ENCODE measurements at regions of chr15 and their contacts with region 1.

Region 1: DNA sequence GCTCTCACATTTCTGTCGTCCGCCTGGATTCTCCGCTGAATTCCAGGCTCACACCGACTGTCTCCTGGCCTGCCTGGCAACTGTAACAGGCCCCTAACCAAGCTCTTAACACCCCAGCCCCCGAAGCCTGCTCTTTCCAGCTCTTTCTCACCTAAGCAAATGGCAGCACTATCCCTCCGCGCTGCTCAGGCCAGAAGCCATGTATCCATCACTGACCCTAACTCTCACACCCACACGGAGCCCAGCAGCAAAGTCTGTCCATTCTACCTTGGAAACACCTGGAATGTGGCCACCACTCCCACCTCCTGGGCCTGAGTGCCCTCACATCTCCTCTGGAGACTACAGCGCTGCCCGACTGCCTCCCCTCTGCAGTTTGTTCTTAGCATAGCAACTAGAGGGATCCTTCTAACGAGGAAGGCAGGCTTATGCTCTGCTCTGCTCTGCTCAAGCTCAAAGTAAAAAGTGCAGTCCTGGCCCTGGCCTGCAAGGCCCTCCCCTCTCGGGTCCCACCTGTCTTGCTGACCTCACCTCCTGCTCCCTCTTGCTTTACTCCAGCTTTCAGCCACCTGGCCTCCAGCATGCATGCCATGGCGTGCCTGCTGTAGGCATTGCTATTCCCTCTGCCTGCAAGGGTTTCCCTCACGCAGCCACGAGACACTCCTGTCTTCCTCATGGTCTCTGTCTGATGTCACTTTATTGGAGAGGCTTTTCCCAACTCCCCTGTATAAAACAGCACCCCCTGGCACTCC is 27.2 kb downstream of the FEM1B start:
- DNase-seq: peak; percentile 46
- ATAC-seq: peak; percentile 68
- H3K4me3 Mint-ChIP-seq: no peak overlapping the region
- H3K27ac Mint-ChIP-seq: peak overlapping the region; percentile 55
- H3K4me1 Mint-ChIP-seq: peaks cover 39% of the 10 kb centered on the region
- H3K27me3 Mint-ChIP-seq: no peaks in the 10 kb centered on the region
- CTCF ChIP-seq: no peak

Region 2: GRCh38 chr15:68192804-68193486 is 111.8 kb before region 1 on chr15:
- CTCF ChIA-PET with region 1: interaction called, 16 read pairs
- POLR2A ChIA-PET with region 1: no interaction called
- DNase-seq: no peak
- ATAC-seq: no peak
- H3K4me3 Mint-ChIP-seq: no peak overlapping the region
- H3K27ac Mint-ChIP-seq: peak overlapping the region; percentile 84
- H3K4me1 Mint-ChIP-seq: peaks cover 17% of the 10 kb centered on the region
- H3K27me3 Mint-ChIP-seq: no peaks in the 10 kb centered on the region
- CTCF ChIP-seq: no peak

Region 3: GRCh38 chr15:68252925-68253534 is 51.7 kb before region 1 on chr15:
- CTCF ChIA-PET with region 1: interaction called, 218 read pairs
- POLR2A ChIA-PET with region 1: interaction called, 5 read pairs
- DNase-seq: no peak
- ATAC-seq: peak; percentile 11; the same call in 1 of the 2 replicates
- H3K4me3 Mint-ChIP-seq: no peak overlapping the region
- H3K27ac Mint-ChIP-seq: no peak overlapping the region
- H3K4me1 Mint-ChIP-seq: peaks cover 13% of the 10 kb centered on the region
- H3K27me3 Mint-ChIP-seq: no peaks in the 10 kb centered on the region; the same call in 1 of the 2 replicates
- CTCF ChIP-seq: peak; percentile 61

Region 4: GRCh38 chr15:68322796-68323195 is 18.0 kb after region 1 on chr15:
- CTCF ChIA-PET with region 1: interaction called, 21 read pairs
- POLR2A ChIA-PET with region 1: interaction called, 7 read pairs
- DNase-seq: no peak
- ATAC-seq: no peak
- H3K4me3 Mint-ChIP-seq: no peak overlapping the region
- H3K27ac Mint-ChIP-seq: no peak overlapping the region
- H3K4me1 Mint-ChIP-seq: peaks cover 11% of the 10 kb centered on the region
- H3K27me3 Mint-ChIP-seq: peaks cover 3% of the 10 kb centered on the region
- CTCF ChIP-seq: no peak

Region 5: DNA sequence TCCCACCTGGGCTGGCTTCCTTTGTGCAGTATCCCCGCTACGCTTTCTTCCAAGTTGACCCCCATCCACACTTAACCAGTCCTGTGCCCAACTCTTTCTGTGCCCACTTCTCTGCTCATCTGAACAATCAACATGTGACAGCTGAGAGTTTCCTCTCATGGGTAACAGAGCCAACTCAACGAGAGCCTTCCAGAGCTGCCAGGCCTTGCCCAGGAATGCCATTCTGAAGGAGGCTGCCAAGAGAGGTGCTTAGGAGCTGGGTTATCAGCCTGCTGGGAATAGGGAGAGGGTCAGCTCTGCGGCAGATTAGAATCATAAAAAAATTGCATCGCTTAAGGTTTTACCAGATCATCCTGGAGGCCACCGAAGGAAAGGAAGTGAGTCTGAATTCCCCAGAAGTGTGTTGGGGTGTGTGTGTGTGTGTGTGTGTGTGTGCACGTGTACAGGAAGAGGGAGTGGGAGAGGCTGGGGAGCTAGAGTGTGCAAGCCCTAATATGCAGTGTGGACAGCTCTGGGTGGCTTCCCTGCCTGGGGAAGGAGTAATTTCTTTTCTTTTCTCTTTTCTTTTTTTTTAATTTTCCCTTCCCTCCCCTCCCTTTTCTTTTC is 60.5 kb after region 1 on chr15:
- CTCF ChIA-PET with region 1: interaction called, 37 read pairs
- POLR2A ChIA-PET with region 1: no interaction called
- DNase-seq: no peak
- ATAC-seq: no peak
- H3K4me3 Mint-ChIP-seq: no peak overlapping the region
- H3K27ac Mint-ChIP-seq: no peak overlapping the region
- H3K4me1 Mint-ChIP-seq: peaks cover 6% of the 10 kb centered on the region
- H3K27me3 Mint-ChIP-seq: no peaks in the 10 kb centered on the region
- CTCF ChIP-seq: no peak

Region 6: DNA sequence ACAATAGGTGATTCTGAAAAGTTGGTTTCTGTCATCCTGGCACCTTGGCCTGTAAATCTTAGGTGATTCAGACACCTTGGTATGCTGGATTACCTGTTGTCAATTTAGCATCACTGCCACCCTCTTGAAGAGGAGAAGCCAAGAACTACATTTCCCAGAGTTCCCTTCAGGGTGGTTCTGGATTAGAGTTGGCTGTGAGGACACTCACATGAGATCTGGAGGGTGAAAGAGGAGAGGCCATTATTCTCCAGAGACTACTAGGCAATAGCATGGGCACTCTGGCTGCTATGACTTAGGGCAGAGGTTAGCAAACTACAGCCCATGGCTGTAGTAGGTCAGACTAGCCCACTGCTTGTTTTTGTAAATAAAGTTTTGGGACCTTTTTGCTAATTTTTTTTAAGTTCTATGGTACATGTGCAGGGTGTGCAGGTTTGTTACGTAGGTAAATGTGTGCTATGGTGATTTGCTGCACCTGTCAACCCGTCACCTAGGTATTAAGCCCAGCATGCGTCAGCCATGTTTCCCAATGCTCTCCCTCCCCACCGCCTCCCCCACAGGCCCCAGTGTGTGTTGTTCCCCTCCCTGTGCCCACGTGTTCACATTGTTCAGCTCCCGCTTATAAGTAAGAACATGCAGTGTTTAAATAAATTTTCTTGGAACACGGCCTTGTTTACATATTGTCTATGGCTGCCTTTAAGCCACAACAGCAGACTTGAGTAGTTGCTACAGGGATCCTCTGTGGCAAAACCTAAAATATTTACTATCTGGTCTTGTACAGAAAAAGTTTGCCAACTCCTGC is 232.5 kb after region 1 on chr15:
- CTCF ChIA-PET with region 1: interaction called, 36 read pairs
- POLR2A ChIA-PET with region 1: no interaction called
- DNase-seq: no peak
- ATAC-seq: peak; percentile 73
- H3K4me3 Mint-ChIP-seq: no peak overlapping the region
- H3K27ac Mint-ChIP-seq: no peak overlapping the region
- H3K4me1 Mint-ChIP-seq: no peaks in the 10 kb centered on the region
- H3K27me3 Mint-ChIP-seq: peaks cover 6% of the 10 kb centered on the region
- CTCF ChIP-seq: no peak

Measured in WTC11 (cell line).